CD4-positive, alpha-beta T cell (primary cell): ENCODE measurements at regions of chr14 and their contacts with region 1.

Region 1: DNA sequence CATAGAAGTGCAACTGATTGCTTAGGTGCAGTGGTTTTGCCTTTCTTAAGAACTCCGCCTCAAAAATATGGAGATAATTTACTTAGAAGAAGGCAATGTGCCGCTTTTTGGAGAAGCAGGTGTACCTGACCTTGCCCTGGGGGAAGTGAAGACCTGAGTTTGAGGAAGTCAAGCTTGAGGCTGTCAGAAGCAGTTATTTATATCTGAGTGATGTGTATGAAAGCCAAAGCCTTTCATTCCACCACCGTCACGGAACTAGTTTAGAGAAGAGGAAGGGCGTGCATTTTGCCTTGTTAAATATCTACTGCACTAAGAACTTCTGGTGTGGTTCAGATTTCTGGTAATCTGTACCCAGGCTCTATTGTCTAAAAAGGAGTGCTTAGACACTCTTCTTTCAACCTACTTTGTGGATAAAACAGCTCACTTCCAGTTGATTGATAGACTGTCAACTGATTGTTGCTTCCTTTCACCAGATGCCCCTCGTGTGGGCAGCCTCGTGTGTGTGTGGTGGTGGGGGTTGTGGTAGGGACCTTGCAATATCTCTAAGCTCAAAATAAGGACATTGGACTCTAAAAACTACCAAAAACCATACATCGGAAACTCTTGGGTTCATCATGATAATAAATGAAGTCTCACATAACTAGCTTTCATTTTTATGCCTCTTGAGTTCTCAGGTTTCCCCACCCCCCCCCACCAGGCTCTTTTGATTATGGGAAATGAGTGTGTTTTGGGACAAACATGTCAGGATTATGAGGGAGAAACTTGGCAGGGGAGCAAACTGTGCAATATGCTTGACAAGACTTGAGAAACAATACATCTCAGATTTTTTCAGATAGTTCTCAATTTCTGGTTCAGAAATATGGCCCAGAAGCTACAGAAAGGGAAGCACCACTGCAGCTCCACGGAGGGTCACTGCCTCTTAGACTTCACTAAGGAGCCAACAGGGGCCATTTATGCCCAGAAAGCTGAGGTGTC is 78.6 kb downstream of the ARF6 start:
- DNase-seq: peak in 13 of 14 experiments; percentile 16 to 87 (median 55)
- ATAC-seq: peak; percentile 84
- H3K4me3 ChIP-seq: peak overlapping the region; percentile 30
- H3K4me3 Mint-ChIP-seq: peak overlapping the region; percentile 50
- H3K27ac ChIP-seq: peak overlapping the region; percentile 80 to 85
- H3K27ac Mint-ChIP-seq: peak overlapping the region; percentile 90
- H3K4me1 ChIP-seq: peaks cover 66% of the 10 kb centered on the region
- H3K4me1 Mint-ChIP-seq: peaks cover 59% of the 10 kb centered on the region
- H3K27me3 ChIP-seq: no peaks in the 10 kb centered on the region
- H3K27me3 Mint-ChIP-seq: no peaks in the 10 kb centered on the region
- CTCF ChIP-seq: no peak

Region 2: GRCh38 chr14:49892636-49893308 is 78.7 kb before region 1 on chr14 and contains the start of gene ARF6:
- CTCF ChIA-PET with region 1: interaction called, 4 read pairs
- POLR2A ChIA-PET with region 1: interaction called, 52 read pairs
- intact Hi-C with region 1: loop called (anchors 1 to 5 kb)
- DNase-seq: peak; percentile 86 to 98 (median 96)
- ATAC-seq: peak; percentile 69
- H3K4me3 ChIP-seq: peak within 1 kb of the TSS; percentile 96
- H3K4me3 Mint-ChIP-seq: peak within 1 kb of the TSS; percentile 98
- H3K27ac ChIP-seq: peak within 1 kb of the TSS; percentile 93 to 99
- H3K27ac Mint-ChIP-seq: peak within 1 kb of the TSS; percentile 96
- H3K4me1 ChIP-seq: peaks cover 19% of the 10 kb centered on the region
- H3K4me1 Mint-ChIP-seq: peaks cover 43% of the 10 kb centered on the region
- H3K27me3 ChIP-seq: no peaks in the 10 kb centered on the region
- H3K27me3 Mint-ChIP-seq: no peaks in the 10 kb centered on the region
- CTCF ChIP-seq: no peak
- total RNA-seq, gene ARF6: 67.2 to 69.7 TPM

Region 3: GRCh38 chr14:49946320-49947141 is 24.9 kb before region 1 on chr14:
- CTCF ChIA-PET with region 1: interaction called, 5 read pairs
- POLR2A ChIA-PET with region 1: interaction called, 62 read pairs
- intact Hi-C with region 1: loop called in 1 of 2 experiments (anchors 5 kb)
- DNase-seq: peak in 10 of 14 experiments; percentile 10 to 66 (median 26)
- ATAC-seq: peak; percentile 72
- H3K4me3 ChIP-seq: no peak overlapping the region
- H3K4me3 Mint-ChIP-seq: peak overlapping the region; percentile 56
- H3K27ac ChIP-seq: peak overlapping the region; percentile 69 to 86
- H3K27ac Mint-ChIP-seq: peak overlapping the region; percentile 88
- H3K4me1 ChIP-seq: peaks cover 66% of the 10 kb centered on the region
- H3K4me1 Mint-ChIP-seq: peaks cover 78% of the 10 kb centered on the region
- H3K27me3 ChIP-seq: no peaks in the 10 kb centered on the region
- H3K27me3 Mint-ChIP-seq: no peaks in the 10 kb centered on the region
- CTCF ChIP-seq: no peak

Region 4: DNA sequence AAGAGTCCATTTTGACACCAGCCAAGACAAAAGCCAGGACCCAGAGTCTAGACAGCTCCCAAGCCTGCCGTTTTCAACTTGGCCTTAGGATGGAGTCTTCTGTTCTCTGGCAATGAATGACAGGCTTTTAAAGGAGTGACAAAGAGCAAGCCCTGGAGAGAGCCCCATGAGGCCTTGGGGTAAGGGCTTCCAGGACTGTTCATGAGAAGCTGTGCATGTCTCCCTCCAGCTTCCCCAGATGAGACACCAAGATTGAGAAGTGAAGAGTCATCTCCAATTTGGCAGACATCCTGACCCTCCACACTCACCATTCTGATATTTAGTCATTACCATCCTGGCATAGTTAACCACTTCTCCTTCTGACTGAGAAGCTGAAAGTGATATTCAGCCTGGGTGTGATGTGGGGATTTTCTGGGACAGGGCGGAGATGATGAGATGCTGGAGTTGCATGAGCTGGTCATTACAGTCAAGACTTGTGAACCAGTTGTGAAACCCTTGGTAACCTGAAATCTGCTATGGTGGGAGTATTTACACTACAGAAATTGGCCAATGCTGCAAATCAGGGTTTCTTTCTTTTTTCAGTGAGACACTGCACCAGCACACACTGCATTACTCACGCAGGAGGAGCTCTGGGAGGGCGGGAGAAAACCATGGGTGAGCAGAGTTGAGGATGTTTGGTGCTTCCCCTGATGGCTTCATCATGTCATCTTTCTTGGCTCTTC is 67.1 kb after region 1 on chr14:
- CTCF ChIA-PET with region 1: interaction called, 3 read pairs
- POLR2A ChIA-PET with region 1: interaction called, 10 read pairs
- intact Hi-C with region 1: no loop called
- DNase-seq: peak in 7 of 14 experiments; percentile 11 to 78 (median 49)
- ATAC-seq: peak; percentile 11
- H3K4me3 ChIP-seq: no peak overlapping the region
- H3K4me3 Mint-ChIP-seq: peak overlapping the region; percentile 65
- H3K27ac ChIP-seq: peak overlapping the region; percentile 8 to 66
- H3K27ac Mint-ChIP-seq: peak overlapping the region; percentile 55
- H3K4me1 ChIP-seq: peaks cover 62% of the 10 kb centered on the region
- H3K4me1 Mint-ChIP-seq: peaks cover 56% of the 10 kb centered on the region
- H3K27me3 ChIP-seq: no peaks in the 10 kb centered on the region
- H3K27me3 Mint-ChIP-seq: no peaks in the 10 kb centered on the region
- CTCF ChIP-seq: no peak

Region 5: DNA sequence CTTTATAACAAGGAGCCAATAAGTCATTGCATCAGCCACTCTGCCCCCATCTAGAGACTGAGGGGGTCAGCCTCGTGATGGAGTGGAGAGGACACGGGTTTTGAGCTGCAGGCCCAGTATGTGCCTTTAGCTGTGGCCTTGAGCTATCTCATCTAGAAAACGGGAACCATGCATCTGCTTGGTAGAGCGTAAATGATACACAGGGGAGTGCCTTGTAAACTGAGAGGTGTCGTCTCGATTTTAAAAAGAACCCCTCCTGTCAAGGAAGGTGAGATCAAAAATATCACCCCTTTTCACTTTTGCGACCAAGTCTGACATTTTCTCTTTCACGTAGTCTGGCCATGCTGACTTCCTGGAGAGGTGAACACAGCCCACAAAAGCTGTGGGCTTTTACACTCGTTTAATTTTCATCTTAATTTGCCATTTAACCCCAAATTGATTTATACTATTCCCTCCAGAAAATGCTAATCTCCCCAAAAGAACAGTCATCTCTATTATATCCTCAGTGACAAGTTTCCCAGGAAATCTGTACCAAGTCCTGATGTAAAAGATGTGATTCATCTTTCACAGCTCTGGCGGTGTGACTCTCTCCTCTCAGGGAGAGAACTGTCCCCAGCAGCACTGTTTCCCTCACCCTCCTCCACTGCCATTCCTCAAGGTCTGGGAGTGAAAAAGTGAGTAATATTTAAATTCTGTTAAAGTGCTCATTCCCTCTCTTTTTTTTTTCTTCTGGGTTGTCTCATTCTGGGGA is 114.3 kb after region 1 on chr14:
- CTCF ChIA-PET with region 1: no interaction called
- POLR2A ChIA-PET with region 1: interaction called, 18 read pairs
- intact Hi-C with region 1: loop called in 1 of 2 experiments (anchors 2 kb)
- DNase-seq: peak in 4 of 14 experiments; percentile 28 to 65 (median 55)
- ATAC-seq: no peak
- H3K4me3 ChIP-seq: no peak overlapping the region
- H3K4me3 Mint-ChIP-seq: peak overlapping the region; percentile 65
- H3K27ac ChIP-seq: peak overlapping the region; percentile 96 to 97
- H3K27ac Mint-ChIP-seq: peak overlapping the region; percentile 93
- H3K4me1 ChIP-seq: peaks cover 80% of the 10 kb centered on the region
- H3K4me1 Mint-ChIP-seq: peaks cover 89% of the 10 kb centered on the region
- H3K27me3 ChIP-seq: no peaks in the 10 kb centered on the region
- H3K27me3 Mint-ChIP-seq: no peaks in the 10 kb centered on the region
- CTCF ChIP-seq: no peak

Region 6: DNA sequence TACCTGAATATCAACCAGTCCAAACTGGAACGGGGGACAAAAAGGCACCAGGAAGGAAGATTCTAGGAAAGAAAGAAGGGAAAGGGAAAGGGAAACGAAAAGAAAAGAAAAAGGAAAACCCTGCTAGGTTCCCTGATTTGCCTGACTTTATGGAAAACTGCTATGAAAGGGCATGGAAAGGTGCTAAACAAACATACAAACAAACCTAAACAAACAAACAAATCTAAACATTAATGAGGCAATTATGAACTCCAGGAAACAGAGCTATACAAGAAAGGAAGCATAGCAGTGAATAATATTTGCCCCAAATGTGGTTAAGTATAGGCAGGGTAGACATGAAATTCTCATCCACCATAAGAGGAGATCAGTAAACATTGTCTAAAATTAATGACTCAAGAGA is 156.8 kb after region 1 on chr14:
- CTCF ChIA-PET with region 1: no interaction called
- POLR2A ChIA-PET with region 1: no interaction called
- intact Hi-C with region 1: no loop called
- DNase-seq: no peak
- ATAC-seq: no peak
- H3K4me3 ChIP-seq: no peak overlapping the region
- H3K4me3 Mint-ChIP-seq: no peak overlapping the region
- H3K27ac ChIP-seq: no peak overlapping the region
- H3K27ac Mint-ChIP-seq: no peak overlapping the region
- H3K4me1 ChIP-seq: no peaks in the 10 kb centered on the region
- H3K4me1 Mint-ChIP-seq: no peaks in the 10 kb centered on the region
- H3K27me3 ChIP-seq: no peaks in the 10 kb centered on the region
- H3K27me3 Mint-ChIP-seq: no peaks in the 10 kb centered on the region
- CTCF ChIP-seq: no peak